ENCODE measurements at regions of chr15 and their contacts with region 1.

Region 1: DNA sequence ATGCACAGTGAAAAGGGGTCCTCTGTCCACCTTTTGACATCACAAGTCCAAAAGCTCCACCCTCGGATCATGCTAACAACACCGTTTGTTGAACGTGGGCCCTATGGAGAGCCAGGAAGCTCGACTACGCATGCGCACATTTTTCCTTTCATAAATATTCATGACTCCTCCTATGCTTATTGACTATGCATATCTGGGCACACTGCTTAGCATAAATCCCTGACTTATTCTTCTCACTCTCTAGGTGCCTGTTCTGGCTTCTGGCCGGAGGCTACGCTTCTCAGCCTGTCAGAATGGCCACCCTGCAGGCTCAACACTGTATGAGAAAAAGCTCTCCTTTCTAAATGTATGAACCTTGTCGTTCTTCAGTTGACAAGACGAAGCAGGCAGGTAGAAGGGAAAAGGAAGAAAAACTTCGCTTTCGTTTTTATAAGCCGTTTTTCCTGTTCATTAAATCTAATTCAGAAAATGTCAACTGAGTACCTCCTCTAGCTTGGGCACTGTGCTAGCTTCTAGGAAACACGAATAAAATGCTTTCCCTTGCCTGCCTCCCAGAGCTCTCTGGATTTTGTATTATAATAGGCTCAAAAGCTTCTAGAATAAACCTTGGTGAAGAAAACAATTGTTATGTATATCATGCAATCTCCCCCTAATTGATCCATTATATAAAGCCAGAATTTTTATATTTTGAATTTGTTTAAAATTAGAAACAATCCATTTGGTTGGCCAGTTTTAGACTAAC is 207.7 kb downstream of the ATP10A start:
- DNase-seq: no peak
- H3K4me3 ChIP-seq: peak overlapping the region in 1 of 4 experiments; percentile 7; a peak in 1 of 8 replicates
- H3K27ac ChIP-seq: no peak overlapping the region
- H3K4me1 ChIP-seq: peaks cover 0 to 11% (median 8%) of the 10 kb centered on the region in 4 experiments; a peak in 5 of 7 replicates
- H3K27me3 ChIP-seq: peaks cover 0 to 7% (median 1%) of the 10 kb centered on the region in 4 experiments; a peak in 4 of 7 replicates
- CTCF ChIP-seq: no peak
- EP300 ChIP-seq: no peak
- POLR2A ChIP-seq: no peak
- RAD21 ChIP-seq: no peak

Region 2: GRCh38 chr15:25587616-25588340 is 67.6 kb before region 1 on chr15:
- CTCF ChIA-PET with region 1: no interaction called
- POLR2A ChIA-PET with region 1: no interaction called
- DNase-seq: no peak
- H3K4me3 ChIP-seq: no peak overlapping the region
- H3K27ac ChIP-seq: no peak overlapping the region
- H3K4me1 ChIP-seq: no peaks in the 10 kb centered on the region
- H3K27me3 ChIP-seq: 0 out of 7 replicates have a peak, but pooled peaks cover 0 to 2% (median 0%) of the 10 kb centered on the region in 4 experiments
- CTCF ChIP-seq: no peak
- EP300 ChIP-seq: no peak
- POLR2A ChIP-seq: no peak
- RAD21 ChIP-seq: no peak

Region 3: DNA sequence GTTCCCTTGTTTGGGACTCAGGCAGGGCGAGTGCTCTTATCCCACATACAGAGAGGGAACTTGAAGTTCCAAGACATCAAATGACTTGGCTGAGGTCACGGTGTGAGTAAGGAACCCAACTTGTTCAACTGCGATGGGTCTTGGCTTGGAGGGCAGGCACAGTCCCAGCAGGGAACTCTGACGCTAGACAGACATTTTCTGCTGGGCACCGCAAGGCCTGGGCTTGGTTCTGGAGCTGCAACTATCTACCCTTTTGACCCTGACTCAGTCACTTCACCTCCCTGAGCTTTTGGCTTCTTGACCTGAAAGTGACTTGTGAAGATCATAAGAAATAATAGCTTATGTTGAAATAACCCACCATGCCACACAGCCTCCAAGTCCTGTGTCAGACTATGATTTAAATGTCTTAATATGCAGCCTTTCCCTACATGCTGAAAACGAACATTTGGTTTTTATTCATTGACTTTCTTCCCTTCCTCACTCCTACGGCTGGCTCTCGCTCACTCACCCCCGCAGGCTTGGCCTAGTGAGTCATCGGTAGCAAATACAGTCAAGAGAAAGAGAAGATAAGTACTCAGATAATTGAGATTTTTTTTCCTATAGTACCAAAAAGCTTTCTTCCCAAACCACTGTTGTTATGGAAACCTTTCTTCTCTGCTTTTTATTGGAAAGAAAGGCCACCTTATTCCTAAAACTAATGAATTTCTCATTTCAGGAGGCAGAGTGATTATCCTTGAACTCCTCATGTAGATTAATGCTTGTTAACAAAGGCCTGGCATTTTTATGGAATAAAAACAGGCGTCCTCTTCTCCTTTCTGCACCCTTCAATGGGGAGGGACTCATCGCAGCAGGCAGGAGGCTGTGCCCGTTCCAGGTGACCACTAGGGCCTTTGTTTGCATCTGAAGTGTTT is 29.4 kb after region 1 on chr15:
- CTCF ChIA-PET with region 1: interaction called, 15 read pairs
- POLR2A ChIA-PET with region 1: no interaction called
- DNase-seq: no peak
- H3K4me3 ChIP-seq: no peak overlapping the region
- H3K27ac ChIP-seq: no peak overlapping the region
- H3K4me1 ChIP-seq: peaks cover 0 to 7% (median 0%) of the 10 kb centered on the region in 4 experiments; a peak in 3 of 7 replicates
- H3K27me3 ChIP-seq: no peaks in the 10 kb centered on the region
- CTCF ChIP-seq: peak in 1 of 3 experiments; percentile 6; a peak in 1 of 4 replicates
- EP300 ChIP-seq: no peak
- POLR2A ChIP-seq: no peak
- RAD21 ChIP-seq: no peak